ENCODE measurements at regions of chr5 and their contacts with region 1.

Region 1: DNA sequence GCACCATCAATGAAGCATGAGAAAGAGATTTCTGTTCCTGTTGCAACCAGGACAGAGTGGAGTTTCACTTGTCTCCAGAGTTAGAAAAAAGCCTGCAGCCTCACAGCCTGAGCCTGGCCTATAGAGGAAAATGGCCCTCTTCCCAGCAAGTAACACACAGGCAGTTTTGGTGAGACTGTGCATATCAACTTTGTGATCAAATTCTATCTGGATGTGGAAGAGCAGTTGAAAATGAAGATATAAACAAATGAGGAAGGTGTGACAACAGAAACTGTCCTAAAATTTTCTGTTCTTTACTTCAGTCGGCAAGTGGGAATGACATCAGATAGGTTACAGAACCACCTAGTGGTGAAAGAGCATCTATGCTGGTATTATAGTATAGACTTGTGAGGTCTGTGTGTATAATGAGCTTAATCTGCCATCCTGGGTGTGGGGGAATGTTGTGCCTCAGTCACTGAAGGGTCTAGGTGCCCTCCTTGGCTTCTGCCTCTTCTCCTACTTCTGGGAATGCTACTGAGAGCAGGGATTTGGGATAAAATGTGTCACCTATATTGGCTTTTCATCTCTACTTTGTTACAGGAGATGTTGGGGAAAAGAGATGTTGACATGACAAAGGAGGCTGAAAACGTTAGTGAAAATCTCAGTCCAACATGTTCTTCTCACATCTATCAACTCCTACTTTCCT is 28.2 kb downstream of the YIPF5 start:
- DNase-seq: peak; percentile 48
- H3K4me3 ChIP-seq: no peak overlapping the region
- H3K27ac ChIP-seq: no peak overlapping the region
- H3K4me1 ChIP-seq: peaks cover 4% of the 10 kb centered on the region
- H3K27me3 ChIP-seq: no peaks in the 10 kb centered on the region
- CTCF ChIP-seq: peak; percentile 67 to 80

Region 2: DNA sequence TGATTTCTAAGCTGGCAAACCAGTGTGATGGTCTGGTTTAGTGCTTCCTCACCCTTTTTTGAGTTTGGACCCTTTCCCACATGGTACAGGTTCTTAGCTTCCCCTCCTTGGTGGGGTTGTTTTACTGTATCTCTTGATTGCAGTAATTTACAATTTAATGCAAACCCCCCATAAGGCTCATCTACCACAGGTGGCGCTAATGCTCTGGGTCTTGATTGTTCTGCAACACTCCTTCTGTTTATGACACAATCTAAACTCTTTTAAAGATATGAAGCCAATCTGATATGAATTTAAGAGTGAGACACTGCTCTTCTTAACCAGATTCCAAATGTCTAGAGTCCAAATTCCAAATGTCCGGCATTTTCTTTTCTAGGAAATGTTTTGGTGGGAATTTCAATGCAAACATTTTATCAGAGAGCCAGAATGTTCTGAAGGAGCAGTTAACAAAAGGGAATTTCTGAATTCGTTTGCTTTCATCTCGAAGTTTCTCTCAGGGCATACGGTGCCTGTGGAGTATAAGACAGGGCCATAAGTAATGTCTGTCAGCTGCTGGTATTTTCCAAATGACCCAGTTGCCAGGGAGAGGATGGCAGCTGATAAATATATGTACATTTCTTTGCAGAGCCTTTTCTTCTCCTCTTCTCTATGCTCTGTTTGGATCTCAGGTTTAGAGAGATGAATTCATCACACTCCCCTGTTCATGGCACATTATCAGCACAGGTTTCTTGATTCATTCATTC is 1125.3 kb before region 1 on chr5:
- CTCF ChIA-PET with region 1: no interaction called
- dilution Hi-C with region 1: no loop called
- in situ Hi-C with region 1: no loop called
- intact Hi-C with region 1: loop called (anchors 10 kb)
- DNase-seq: peak; percentile 33
- H3K4me3 ChIP-seq: no peak overlapping the region
- H3K27ac ChIP-seq: no peak overlapping the region
- H3K4me1 ChIP-seq: peaks cover 5% of the 10 kb centered on the region
- H3K27me3 ChIP-seq: no peaks in the 10 kb centered on the region
- CTCF ChIP-seq: peak; percentile 79 to 80

Region 3: GRCh38 chr5:143693651-143694252 is 448.5 kb before region 1 on chr5:
- CTCF ChIA-PET with region 1: no interaction called
- dilution Hi-C with region 1: no loop called
- in situ Hi-C with region 1: no loop called
- intact Hi-C with region 1: no loop called
- DNase-seq: no peak
- H3K4me3 ChIP-seq: no peak overlapping the region
- H3K27ac ChIP-seq: no peak overlapping the region
- H3K4me1 ChIP-seq: peaks cover 11% of the 10 kb centered on the region
- H3K27me3 ChIP-seq: no peaks in the 10 kb centered on the region
- CTCF ChIP-seq: no peak

Region 4: GRCh38 chr5:143968011-143968878 is 174.0 kb before region 1 on chr5:
- CTCF ChIA-PET with region 1: no interaction called
- dilution Hi-C with region 1: no loop called
- in situ Hi-C with region 1: no loop called
- intact Hi-C with region 1: loop called (anchors 1 kb)
- DNase-seq: peak; percentile 70
- H3K4me3 ChIP-seq: no peak overlapping the region
- H3K27ac ChIP-seq: no peak overlapping the region
- H3K4me1 ChIP-seq: peaks cover 7% of the 10 kb centered on the region
- H3K27me3 ChIP-seq: no peaks in the 10 kb centered on the region
- CTCF ChIP-seq: peak; percentile 39 to 59

Region 5: DNA sequence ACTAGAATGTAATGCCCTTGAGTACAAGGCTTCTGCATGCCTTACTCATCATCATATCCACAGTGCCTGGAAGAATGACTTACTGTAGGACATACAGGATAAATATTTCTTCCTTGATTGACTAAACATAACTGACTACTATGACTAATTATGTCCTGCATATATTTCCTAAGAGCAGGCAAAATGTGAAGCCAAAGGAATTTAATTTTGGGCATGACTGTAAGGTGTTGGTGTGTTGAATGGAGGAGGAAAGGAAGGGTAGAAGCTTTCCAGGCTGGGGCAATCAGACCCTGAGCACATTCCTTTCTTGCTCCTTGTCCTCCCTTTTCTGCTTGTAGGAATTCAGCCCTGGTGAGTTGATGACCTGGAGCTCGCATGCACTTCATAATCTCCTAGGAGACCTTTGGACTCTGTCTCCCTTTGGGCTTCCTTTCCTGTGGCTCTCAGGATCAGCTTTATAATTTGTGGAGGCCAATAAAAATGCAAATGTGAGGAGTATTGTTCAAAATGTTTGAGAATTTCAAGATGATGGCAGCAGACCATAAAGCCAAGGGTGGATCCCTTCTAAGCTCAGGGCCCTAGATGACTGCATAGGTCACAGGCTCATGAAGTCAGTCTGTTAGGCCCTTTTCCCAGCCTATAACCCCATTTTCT is 156.3 kb before region 1 on chr5:
- CTCF ChIA-PET with region 1: no interaction called
- dilution Hi-C with region 1: no loop called
- in situ Hi-C with region 1: loop called in 1 of 2 experiments (anchors 25 kb)
- intact Hi-C with region 1: no loop called
- DNase-seq: peak; percentile 87
- H3K4me3 ChIP-seq: no peak overlapping the region
- H3K27ac ChIP-seq: peak overlapping the region; percentile 68
- H3K4me1 ChIP-seq: peaks cover 27% of the 10 kb centered on the region
- H3K27me3 ChIP-seq: no peaks in the 10 kb centered on the region
- CTCF ChIP-seq: no peak